ENCODE measurements at regions of chrX and their contacts with region 1.

Region 1: DNA sequence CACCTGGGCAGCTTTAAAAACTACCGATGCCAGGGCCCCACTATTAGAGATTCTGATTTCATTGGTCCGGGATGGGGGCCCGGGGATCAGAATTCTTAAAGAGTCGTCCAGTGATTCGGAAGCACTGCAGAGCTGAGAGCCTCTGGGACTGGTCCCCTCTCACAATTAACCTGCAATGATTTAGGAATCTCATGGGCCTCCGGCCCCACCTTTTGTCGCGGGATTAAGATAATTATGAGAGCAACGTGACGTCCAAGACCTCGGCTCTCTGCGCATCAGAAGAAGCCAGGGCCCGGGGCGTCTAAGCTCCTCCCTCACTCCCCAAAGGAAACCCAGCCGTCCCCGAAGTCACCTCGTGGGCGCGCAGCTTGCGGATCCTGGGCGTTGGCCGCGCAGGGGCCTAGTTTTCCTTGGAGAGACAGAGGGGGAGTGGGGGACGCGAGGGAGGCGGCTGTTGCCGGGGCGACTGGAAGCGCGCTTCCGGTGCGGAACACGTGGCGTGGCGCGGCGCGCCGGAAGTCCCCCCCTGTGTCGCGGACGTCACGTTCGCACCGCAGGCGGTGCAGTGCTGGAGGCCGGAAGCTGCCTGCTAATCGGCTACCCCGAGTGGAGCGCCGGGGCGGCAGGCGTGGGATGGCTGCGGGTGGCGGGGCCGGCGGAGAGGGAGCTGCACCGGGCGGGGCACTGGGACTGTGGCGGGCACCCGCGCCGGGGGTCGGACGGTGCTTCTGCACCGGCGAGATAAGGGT is at the start of gene GEMIN8:
- DNase-seq: peak; percentile 71
- ATAC-seq: peak; percentile 98
- H3K4me3 ChIP-seq: peak within 1 kb of the TSS; percentile 55 to 81 (median 75)
- H3K27ac ChIP-seq: peak within 1 kb of the TSS; percentile 69
- H3K4me1 ChIP-seq: peaks cover 11% of the 10 kb centered on the region; the same call in 1 of the 2 replicates
- H3K27me3 ChIP-seq: no peaks in the 10 kb centered on the region
- CTCF ChIP-seq: peak; percentile 13; the same call in 1 of the 2 replicates
- EP300 ChIP-seq: no peak
- POLR2A ChIP-seq: peak; percentile 58 to 75; a peak in 3 of 4 replicates
- RAD21 ChIP-seq: no peak
- total RNA-seq, gene GEMIN8: 9.7 and 10.5 TPM in 2 replicates

Region 2: DNA sequence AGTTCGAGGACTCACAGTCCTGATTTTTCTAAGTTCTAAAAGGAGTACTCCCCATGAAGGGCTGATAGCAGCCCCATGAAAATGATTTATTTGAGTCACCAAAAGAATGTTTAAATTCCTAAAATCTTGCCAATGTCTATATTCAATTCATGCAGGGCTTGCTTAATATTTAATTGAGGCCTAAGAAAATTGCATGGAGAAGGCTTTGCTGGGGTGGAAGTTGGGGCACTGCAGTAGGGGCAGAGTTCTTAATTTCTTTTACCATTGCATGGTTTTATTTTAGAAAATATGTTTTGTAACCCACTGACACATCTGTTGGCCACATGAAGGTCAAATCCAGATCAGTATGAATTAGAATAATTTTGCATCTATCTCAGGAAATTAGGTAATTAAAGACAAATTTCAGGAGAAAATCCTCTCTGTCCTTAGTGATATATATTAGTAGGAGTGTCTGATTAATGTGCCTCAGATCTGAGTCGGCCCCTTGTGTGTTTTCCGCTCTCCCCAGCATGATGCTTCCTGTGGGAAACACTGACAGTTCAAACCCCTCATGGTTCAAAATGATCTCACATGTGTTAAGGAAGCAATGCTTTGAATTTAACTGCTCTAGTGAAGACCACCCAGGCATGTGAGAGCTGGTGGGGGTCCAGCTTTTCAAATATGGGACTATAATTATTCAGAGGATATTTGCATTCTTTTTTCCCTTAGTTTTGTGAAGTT is 514.2 kb before region 1 on chrX:
- CTCF ChIA-PET with region 1: no interaction called
- POLR2A ChIA-PET with region 1: no interaction called
- in situ Hi-C with region 1: loop called (anchors 10 kb)
- intact Hi-C with region 1: no loop called
- DNase-seq: no peak
- ATAC-seq: no peak
- H3K4me3 ChIP-seq: no peak overlapping the region
- H3K27ac ChIP-seq: no peak overlapping the region
- H3K4me1 ChIP-seq: no peaks in the 10 kb centered on the region
- H3K27me3 ChIP-seq: no peaks in the 10 kb centered on the region
- CTCF ChIP-seq: no peak
- EP300 ChIP-seq: no peak
- POLR2A ChIP-seq: no peak
- RAD21 ChIP-seq: no peak

Region 3: GRCh38 chrX:13653022-13653693 is 376.4 kb before region 1 on chrX and contains the start of gene TCEANC:
- CTCF ChIA-PET with region 1: no interaction called
- POLR2A ChIA-PET with region 1: interaction called, 4 read pairs
- in situ Hi-C with region 1: loop called (anchors 5 kb)
- intact Hi-C with region 1: no loop called
- DNase-seq: peak; percentile 91
- ATAC-seq: peak; percentile 98
- H3K4me3 ChIP-seq: peak within 1 kb of the TSS; percentile 63 to 74 (median 68)
- H3K27ac ChIP-seq: peak within 1 kb of the TSS; percentile 74
- H3K4me1 ChIP-seq: peaks cover 6% of the 10 kb centered on the region
- H3K27me3 ChIP-seq: no peaks in the 10 kb centered on the region
- CTCF ChIP-seq: no peak
- EP300 ChIP-seq: no peak
- POLR2A ChIP-seq: peak; percentile 48 to 59; a peak in 3 of 4 replicates
- RAD21 ChIP-seq: no peak
- total RNA-seq, gene TCEANC: 0.97 and 1.5 TPM in 2 replicates

Region 4: DNA sequence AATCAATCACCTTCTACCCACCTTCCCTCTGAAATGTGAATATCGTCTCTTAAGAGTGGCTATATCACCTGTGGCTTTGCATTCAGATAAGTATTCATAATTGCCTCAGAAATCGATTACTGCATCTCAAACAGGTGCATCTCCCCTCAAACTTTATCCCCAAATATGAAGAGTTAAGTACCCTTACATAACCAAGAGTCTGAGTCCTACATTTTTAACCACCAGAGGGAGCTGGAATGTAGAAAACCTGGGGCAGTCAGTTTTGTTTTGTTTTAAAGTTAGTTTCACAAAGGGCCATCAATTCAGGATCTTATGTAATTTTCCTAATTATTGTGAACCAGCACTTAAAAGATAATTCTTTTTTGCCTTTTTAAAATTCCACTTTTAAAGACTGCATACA is 371.0 kb before region 1 on chrX:
- CTCF ChIA-PET with region 1: no interaction called
- POLR2A ChIA-PET with region 1: interaction called, 4 read pairs
- in situ Hi-C with region 1: loop called (anchors 5 kb)
- intact Hi-C with region 1: loop called (anchors 1 kb)
- DNase-seq: peak; percentile 34
- ATAC-seq: no peak
- H3K4me3 ChIP-seq: peak overlapping the region in 1 of 3 experiments; percentile 21; a peak in 1 of 6 replicates
- H3K27ac ChIP-seq: no peak overlapping the region
- H3K4me1 ChIP-seq: peaks cover 12% of the 10 kb centered on the region
- H3K27me3 ChIP-seq: no peaks in the 10 kb centered on the region
- CTCF ChIP-seq: peak; percentile 65
- EP300 ChIP-seq: no peak
- POLR2A ChIP-seq: no peak
- RAD21 ChIP-seq: no peak

Region 5: DNA sequence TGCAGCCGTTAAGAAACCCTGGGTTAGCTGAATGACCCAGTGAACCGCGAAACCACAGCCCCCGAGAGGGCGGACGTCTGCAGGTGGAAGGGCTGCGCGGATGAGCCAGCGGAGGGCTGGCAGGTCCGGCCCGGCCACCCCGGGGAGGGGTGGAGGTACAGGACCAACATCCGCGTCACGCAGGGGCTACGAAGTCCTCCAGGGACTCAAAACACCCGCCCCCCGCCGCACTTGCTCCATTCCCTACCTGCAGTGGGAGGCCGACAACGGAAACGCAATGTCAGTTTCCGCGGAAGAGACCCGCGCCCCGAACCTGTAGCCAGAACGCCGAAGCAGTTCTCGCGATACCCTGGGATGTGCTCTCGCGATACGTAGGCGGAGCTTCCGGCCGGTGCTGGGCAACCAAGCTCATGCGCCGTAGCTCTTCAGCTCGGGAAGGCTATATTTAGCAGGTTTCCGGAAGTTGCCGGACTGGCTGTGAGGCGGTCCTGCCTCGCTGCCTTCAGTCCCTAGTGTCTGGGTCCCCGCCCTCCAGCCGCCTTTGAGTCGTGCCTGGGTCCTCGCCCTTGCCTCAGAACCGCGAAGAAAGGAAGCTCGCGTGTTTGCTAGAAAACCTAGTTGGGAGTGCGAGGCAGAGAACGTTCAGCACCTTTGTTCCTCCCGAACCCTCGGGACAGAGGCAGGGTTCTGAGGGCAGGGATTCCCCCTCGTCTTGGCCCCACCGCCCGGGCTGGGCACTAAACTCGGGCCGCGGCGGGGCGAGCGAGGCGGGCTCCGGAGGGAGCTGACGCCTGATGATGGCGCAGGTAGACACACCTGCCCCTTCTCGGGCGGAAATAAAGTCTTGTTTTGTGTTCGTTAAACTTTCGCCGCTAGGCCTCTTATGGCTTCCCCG is 295.1 kb before region 1 on chrX and contains the starts of genes OFD1 and TRAPPC2:
- CTCF ChIA-PET with region 1: no interaction called
- POLR2A ChIA-PET with region 1: interaction called, 13 read pairs
- in situ Hi-C with region 1: no loop called
- intact Hi-C with region 1: no loop called
- DNase-seq: peak; percentile 88
- ATAC-seq: peak; percentile 99
- H3K4me3 ChIP-seq: peak within 1 kb of the TSS; percentile 72 to 79 (median 79)
- H3K27ac ChIP-seq: peak within 1 kb of the TSS; percentile 88
- H3K4me1 ChIP-seq: peaks cover 15% of the 10 kb centered on the region
- H3K27me3 ChIP-seq: no peaks in the 10 kb centered on the region; a peak in 1 of 5 replicates
- CTCF ChIP-seq: 0 out of 2 replicates have a peak, but pooled peaks have one; percentile 17
- EP300 ChIP-seq: no peak; a peak in 1 of 4 replicates
- POLR2A ChIP-seq: peak; percentile 77 to 89
- RAD21 ChIP-seq: no peak
- total RNA-seq, gene OFD1: 14.3 and 16.4 TPM in 2 replicates
- total RNA-seq, gene TRAPPC2: 8.1 and 9.2 TPM in 2 replicates

Region 6: GRCh38 chrX:13750204-13750603 is 279.4 kb before region 1 on chrX:
- CTCF ChIA-PET with region 1: interaction called, 5 read pairs
- POLR2A ChIA-PET with region 1: no interaction called
- in situ Hi-C with region 1: no loop called
- intact Hi-C with region 1: loop called (anchors 1 kb)
- DNase-seq: peak; percentile 16
- ATAC-seq: peak; percentile 62
- H3K4me3 ChIP-seq: no peak overlapping the region
- H3K27ac ChIP-seq: no peak overlapping the region
- H3K4me1 ChIP-seq: no peaks in the 10 kb centered on the region
- H3K27me3 ChIP-seq: no peaks in the 10 kb centered on the region
- CTCF ChIP-seq: peak; percentile 52
- EP300 ChIP-seq: no peak
- POLR2A ChIP-seq: no peak
- RAD21 ChIP-seq: no peak

Region 7: GRCh38 chrX:13764765-13765164 is 264.8 kb before region 1 on chrX:
- CTCF ChIA-PET with region 1: interaction called, 3 read pairs
- POLR2A ChIA-PET with region 1: no interaction called
- in situ Hi-C with region 1: loop called (anchors 10 kb)
- intact Hi-C with region 1: loop called (anchors 1 kb)
- DNase-seq: peak; percentile 1
- ATAC-seq: peak; percentile 79
- H3K4me3 ChIP-seq: no peak overlapping the region
- H3K27ac ChIP-seq: no peak overlapping the region
- H3K4me1 ChIP-seq: no peaks in the 10 kb centered on the region
- H3K27me3 ChIP-seq: no peaks in the 10 kb centered on the region
- CTCF ChIP-seq: peak; percentile 30; the same call in 1 of the 2 replicates
- EP300 ChIP-seq: no peak
- POLR2A ChIP-seq: no peak
- RAD21 ChIP-seq: no peak